Activated CD4-positive, alpha-beta T cell treated with anti-CD3 and anti-CD28 coated beads for 36 hours (primary cell): ENCODE measurements at regions of chr11 and their contacts with region 1.

Region 1: DNA sequence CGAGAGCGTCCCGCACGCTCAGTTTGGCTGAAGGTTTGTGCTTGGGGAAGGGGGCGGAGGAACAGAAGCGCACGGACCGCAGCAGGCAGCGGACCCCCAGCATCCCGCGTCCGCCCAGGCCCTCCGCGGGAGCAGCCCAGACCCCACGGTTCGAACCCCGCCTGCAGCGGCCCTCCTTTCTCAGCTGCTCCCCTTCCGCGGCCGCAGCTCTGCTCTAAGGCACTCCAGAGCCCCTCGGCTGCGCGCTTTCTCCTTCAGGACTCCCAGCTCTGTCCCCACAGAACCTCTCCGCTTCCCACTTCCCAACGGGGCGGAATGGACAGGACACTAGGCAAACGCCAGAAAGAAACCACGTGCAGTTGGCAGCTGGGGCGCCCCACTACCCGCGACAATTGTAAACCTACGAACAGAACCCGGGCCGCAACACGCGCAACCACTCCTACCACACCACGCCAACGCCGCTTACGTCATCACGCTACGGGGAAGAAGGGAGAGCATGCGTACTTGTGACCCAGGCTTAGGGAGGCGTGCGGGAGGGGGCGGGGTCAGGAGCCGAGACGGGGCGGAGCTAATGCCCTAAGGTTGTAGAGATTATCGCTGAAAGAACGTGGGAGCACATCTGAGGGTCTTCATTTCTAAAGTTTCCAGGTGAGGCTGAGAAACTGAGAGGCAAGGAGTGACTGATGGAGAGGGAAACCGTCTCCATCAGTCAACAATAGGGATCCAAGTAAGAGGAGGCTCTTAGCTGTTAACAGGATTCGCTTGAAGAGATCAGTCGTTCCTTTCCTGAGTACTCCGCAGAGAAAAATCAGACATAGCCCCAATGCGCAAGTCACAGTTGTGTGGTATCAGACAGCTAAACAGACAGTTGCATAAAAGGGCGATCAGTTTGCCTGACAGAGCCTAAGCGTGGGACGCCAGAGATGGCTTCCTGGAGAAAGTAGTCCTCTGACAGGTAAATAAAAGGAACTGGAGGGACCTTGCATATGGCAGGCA is at the start of gene NARS2:
- DNase-seq: peak; percentile 100
- ATAC-seq: peak; percentile 99
- H3K4me3 Mint-ChIP-seq: peak within 1 kb of the TSS; percentile 97
- H3K27ac Mint-ChIP-seq: peak within 1 kb of the TSS; percentile 89
- H3K4me1 Mint-ChIP-seq: peaks cover 28% of the 10 kb centered on the region
- H3K27me3 Mint-ChIP-seq: no peaks in the 10 kb centered on the region
- total RNA-seq, gene NARS2: 22.9 to 33.4 TPM

Region 2: DNA sequence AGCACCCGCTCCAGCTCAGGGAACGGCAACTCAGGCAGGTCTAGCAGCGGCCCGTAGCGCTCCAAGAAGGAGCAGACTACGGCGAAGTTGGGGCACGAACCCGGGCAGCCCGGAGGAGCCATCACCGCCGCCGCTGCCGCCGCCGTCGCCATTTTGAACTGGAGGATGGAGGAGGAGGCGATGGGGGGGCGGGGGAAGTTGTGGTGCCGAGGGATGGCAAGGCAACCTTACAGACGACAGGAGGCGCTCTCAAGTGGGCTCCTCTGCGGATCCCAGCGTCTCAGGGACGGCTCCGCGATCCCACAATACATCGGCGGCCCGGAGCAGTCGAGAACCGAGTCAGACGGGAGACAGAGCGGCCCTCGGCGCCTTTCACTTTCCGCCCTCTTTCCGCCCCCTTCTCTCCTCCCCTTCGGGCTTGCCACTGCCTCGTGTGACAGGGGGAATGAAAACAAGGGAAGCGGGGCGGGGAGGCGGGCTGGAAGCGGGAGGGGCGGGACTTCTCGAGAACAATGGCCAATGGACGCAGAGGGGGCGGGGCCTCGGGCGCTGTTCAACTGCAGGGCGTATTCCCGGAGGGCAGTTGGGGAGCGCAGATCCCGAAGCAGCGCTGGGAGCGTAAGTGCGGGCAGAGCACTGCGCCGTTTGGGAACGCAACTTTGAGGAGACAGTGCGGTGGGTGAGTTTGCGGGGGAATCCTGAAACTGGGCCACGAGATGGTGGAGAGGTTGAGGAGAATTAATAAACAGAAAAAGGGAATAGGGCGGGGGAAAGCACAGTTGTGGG is 753.9 kb before region 1 on chr11 and contains the starts of genes AAMDC and RSF1:
- CTCF ChIA-PET with region 1: no interaction called
- POLR2A ChIA-PET with region 1: no interaction called
- intact Hi-C with region 1: loop called in 1 of 2 experiments (anchors 1 kb)
- DNase-seq: peak; percentile 99
- ATAC-seq: peak; percentile 88
- H3K4me3 Mint-ChIP-seq: peak within 1 kb of the TSS; percentile 97
- H3K27ac Mint-ChIP-seq: peak within 1 kb of the TSS; percentile 98
- H3K4me1 Mint-ChIP-seq: peaks cover 35% of the 10 kb centered on the region
- H3K27me3 Mint-ChIP-seq: no peaks in the 10 kb centered on the region
- total RNA-seq, gene AAMDC: 4.8 to 5.3 TPM
- total RNA-seq, gene RSF1: 49.9 to 59.2 TPM

Region 3: DNA sequence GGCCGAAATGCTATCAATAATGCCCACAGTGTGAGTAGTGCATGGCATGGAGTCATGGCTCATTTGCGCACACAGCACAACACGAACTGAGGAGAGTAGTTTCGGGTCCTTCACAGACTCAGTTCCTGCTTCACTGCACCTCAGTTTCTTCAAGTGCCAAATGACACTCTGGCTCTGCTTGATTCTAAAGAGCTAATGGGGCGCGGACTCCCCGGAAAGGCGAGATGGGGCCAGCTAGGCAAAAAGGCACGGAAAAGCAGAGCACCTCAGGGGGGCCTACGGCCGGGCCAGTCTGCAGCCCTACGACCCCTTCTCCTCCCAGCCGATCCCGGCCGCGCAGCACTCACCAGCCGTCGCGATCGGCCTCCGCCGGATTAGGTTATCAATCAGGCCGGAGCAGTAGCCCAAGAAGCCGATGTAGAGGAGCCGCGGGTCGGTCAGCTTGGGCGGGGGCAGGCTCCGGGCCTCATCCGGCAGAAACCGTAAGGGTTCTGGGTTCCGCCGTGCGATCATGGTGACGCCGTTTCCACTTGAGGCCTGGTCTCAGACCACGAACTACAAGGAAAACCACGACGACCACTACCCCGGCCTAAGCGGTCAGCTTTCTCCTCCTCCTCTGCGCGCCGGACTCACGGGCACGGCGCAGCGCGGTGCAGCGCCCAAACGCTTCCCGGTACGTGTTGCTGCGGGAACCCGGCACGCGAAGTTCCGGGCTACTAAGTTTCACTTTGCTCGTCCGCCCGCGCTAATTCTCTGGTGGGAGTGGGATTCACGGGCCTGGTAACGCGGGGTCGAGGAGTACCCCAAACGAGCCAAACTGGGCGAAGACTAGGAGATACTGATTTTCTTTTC is 495.2 kb before region 1 on chr11 and contains the start of gene NDUFC2:
- CTCF ChIA-PET with region 1: no interaction called
- POLR2A ChIA-PET with region 1: no interaction called
- intact Hi-C with region 1: loop called in 1 of 2 experiments (anchors 5 kb)
- DNase-seq: peak; percentile 81
- ATAC-seq: peak; percentile 83
- H3K4me3 Mint-ChIP-seq: peak within 1 kb of the TSS; percentile 91
- H3K27ac Mint-ChIP-seq: peak within 1 kb of the TSS; percentile 90
- H3K4me1 Mint-ChIP-seq: peaks cover 49% of the 10 kb centered on the region
- H3K27me3 Mint-ChIP-seq: no peaks in the 10 kb centered on the region
- total RNA-seq, gene NDUFC2: 214 to 236 TPM

Region 4: GRCh38 chr11:78465169-78465942 is 109.3 kb before region 1 on chr11:
- CTCF ChIA-PET with region 1: no interaction called
- POLR2A ChIA-PET with region 1: interaction called, 3 read pairs
- intact Hi-C with region 1: loop called in 1 of 2 experiments (anchors 5 kb)
- DNase-seq: peak; percentile 44
- ATAC-seq: peak; percentile 100
- H3K4me3 Mint-ChIP-seq: peak overlapping the region; percentile 41
- H3K27ac Mint-ChIP-seq: peak overlapping the region; percentile 72
- H3K4me1 Mint-ChIP-seq: peaks cover 16% of the 10 kb centered on the region
- H3K27me3 Mint-ChIP-seq: no peaks in the 10 kb centered on the region

Region 5: DNA sequence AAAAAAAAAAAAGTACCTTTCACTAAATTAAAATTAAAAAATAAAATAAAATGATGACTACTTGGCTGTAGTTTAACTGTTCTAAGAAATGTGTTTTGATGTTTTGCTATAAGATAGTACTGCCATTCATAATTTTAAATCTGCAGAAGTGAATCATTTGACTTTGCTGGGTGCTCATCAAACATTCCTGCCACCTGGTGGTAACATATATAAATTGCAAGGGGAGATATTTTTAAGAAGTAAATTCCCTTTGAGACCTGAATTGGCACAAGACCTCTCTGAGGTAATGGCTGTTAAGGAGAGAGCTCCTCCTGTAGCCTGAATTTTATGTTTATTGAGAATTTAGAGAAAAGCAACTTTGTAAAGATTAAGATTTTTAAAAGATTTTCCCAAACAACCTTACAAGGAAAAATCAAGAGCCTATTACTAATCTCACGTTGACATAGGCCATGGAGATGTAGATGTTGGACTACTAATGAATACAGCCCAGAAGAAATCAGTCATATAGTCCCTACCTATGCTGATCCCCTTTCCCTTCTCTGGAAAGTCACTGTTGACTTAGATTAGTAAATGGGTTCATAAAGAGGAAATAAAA is 11.9 kb after region 1 on chr11:
- CTCF ChIA-PET with region 1: interaction called, 10 read pairs
- POLR2A ChIA-PET with region 1: no interaction called
- intact Hi-C with region 1: no loop called
- DNase-seq: no peak
- ATAC-seq: peak; percentile 44
- H3K4me3 Mint-ChIP-seq: no peak overlapping the region
- H3K27ac Mint-ChIP-seq: no peak overlapping the region
- H3K4me1 Mint-ChIP-seq: no peaks in the 10 kb centered on the region
- H3K27me3 Mint-ChIP-seq: peaks cover 7% of the 10 kb centered on the region